ENCODE measurements at regions of chr15 and their contacts with region 1.

Region 1: GRCh38 chr15:84894442-84895361 is 10.2 kb downstream of the SLC28A1 start:
- DNase-seq: no peak
- ATAC-seq: no peak
- H3K4me3 ChIP-seq: no peak overlapping the region
- H3K4me1 ChIP-seq: no peaks in the 10 kb centered on the region
- CTCF ChIP-seq: no peak

Region 2: DNA sequence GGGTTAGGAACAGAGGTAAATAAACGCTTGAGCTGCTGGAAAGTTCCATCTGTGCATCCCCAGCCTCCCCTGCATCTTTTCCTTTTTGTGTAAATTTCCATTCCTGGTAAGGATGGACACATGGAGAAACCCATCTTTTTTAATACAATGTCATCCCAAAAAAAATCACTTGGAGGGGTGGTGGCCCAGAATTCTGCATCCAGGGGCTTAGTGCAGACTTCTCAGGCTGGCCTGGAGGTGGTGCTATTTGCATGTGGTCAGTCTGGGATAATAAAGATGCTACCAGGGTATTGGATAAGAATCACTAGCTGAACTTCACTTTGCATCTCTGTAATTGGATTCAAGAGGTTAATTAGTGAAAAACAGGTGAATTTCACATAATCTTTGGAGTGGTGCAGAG is 295.7 kb before region 1 on chr15:
- intact Hi-C with region 1: loop called in 1 of 2 experiments (anchors 10 kb)
- DNase-seq: peak in 2 of 3 donors; percentile 40 to 42
- ATAC-seq: no peak
- H3K4me3 ChIP-seq: no peak overlapping the region
- H3K4me1 ChIP-seq: peaks cover 8% of the 10 kb centered on the region
- CTCF ChIP-seq: peak; percentile 34